ENCODE measurements at regions of chr17 and their contacts with region 1.

Region 1: DNA sequence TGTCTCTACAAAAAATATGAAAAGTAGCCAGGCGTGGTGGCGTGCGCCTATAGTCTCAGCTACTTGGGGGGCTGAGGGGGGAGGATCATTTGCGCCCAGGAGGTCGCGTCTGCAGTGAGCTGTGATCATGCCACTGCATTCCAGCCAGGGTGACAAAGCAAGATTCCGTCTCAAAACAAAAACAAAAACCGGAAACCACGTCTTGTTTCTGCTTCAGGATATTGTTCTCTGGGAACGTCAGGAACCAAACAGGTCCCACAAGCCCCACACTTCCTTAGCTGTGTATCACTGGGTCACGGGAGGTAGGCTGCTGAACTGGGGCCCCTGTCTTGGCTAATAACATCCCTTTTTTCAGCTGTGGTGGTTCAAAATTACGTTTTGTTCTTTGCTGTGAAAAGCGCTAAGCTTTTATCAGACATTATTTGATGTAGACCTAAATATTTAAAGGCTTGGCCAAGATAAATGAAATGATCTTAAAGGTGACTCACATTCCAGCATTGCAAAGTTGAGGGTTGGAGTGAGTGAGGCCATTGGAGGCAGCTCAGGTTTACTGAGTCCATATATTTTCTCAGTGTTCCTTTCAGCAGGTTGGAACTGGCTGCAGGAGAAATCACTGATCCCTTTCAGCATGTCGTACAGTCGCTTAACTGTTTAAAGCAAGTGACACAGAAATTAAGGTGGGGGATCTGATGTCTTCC is 16.4 kb upstream of the SEC14L1 start:
- DNase-seq: peak; percentile 91
- ATAC-seq: peak; percentile 23
- H3K4me3 ChIP-seq: peak overlapping the region; percentile 9; the same call in 1 of the 2 replicates
- H3K27ac ChIP-seq: peak overlapping the region; percentile 95
- H3K4me1 ChIP-seq: peaks cover 64% of the 10 kb centered on the region
- H3K27me3 ChIP-seq: no peaks in the 10 kb centered on the region
- CTCF ChIP-seq: no peak

Region 2: GRCh38 chr17:77061669-77062068 is 62.7 kb before region 1 on chr17:
- CTCF ChIA-PET with region 1: no interaction called
- POLR2A ChIA-PET with region 1: no interaction called
- intact Hi-C with region 1: no loop called
- DNase-seq: no peak
- ATAC-seq: no peak
- H3K4me3 ChIP-seq: no peak overlapping the region
- H3K27ac ChIP-seq: no peak overlapping the region
- H3K4me1 ChIP-seq: no peaks in the 10 kb centered on the region; the same call in 1 of the 2 replicates
- H3K27me3 ChIP-seq: peaks cover 8% of the 10 kb centered on the region; the same call in 1 of the 2 replicates
- CTCF ChIP-seq: no peak

Region 3: DNA sequence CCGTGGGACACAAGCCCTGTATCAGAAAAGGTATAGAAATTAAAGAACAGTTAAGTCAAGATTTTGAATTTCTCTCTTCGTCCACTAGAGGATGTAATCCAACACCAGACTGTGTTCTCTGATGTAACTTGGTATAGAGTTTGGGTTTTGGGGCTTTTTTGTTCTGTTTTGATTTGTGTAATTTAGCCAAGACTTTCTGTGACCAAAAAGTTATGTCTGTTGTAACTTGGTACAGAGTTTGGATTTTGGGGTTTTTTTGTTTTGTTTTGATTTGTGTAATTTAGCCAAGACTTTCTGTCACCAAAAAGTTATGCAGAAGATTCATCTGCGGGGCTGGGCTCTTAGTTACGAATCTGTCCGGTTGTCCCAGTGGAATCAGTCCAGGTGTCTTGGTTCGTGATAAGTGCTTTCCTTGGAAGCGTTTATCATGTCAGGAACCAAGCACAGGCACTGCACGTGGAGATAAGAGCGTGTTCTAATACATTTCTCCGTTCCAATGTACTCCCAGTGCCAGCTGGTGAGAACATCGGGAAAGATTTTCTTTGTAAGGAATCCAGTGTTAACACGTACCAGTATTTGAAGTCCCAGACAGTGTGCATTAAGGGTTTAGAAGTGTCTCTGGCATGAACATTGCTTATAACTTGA is 27.6 kb before region 1 on chr17:
- CTCF ChIA-PET with region 1: interaction called, 7 read pairs
- POLR2A ChIA-PET with region 1: interaction called, 11 read pairs
- intact Hi-C with region 1: loop called (anchors 1 kb)
- DNase-seq: peak; percentile 71
- ATAC-seq: peak; percentile 65
- H3K4me3 ChIP-seq: no peak overlapping the region
- H3K27ac ChIP-seq: no peak overlapping the region
- H3K4me1 ChIP-seq: no peaks in the 10 kb centered on the region
- H3K27me3 ChIP-seq: no peaks in the 10 kb centered on the region
- CTCF ChIP-seq: peak; percentile 86

Region 4: GRCh38 chr17:77140166-77140878 is 16.0 kb after region 1 on chr17:
- CTCF ChIA-PET with region 1: interaction called, 14 read pairs
- POLR2A ChIA-PET with region 1: interaction called, 28 read pairs
- intact Hi-C with region 1: loop called (anchors 1 kb)
- DNase-seq: peak; percentile 99
- ATAC-seq: peak; percentile 83
- H3K4me3 ChIP-seq: peak overlapping the region; percentile 61
- H3K27ac ChIP-seq: peak overlapping the region; percentile 90
- H3K4me1 ChIP-seq: peaks cover 48% of the 10 kb centered on the region
- H3K27me3 ChIP-seq: no peaks in the 10 kb centered on the region
- CTCF ChIP-seq: no peak

Region 5: DNA sequence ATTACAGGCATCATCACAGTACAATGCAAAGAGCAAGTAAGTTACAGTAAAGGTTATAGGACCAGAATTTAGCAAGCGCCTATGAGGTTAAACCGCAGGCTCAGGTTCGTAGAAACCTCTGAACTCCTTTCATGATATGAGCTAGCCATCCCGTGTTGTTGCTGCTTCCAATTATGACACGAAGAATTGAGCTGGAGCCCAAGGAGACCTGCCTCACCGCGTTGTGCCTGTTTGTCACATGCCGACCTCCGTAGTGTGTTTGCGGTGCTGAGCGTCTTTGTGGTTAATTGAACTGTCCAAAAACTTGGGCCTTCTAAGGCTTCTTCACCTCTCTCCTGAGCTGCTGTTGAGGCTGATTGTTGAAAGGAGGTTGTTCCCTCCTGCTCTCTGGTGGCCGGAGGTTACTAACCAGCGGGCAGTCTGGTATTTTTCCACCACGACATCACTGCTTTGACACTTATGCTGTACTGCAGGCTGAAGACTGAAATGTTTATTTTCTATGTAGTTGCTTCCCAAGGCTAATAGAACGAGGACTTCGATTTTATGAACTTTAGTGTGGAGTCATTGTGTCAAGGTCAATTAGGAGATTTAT is 84.0 kb after region 1 on chr17:
- CTCF ChIA-PET with region 1: no interaction called
- POLR2A ChIA-PET with region 1: interaction called, 12 read pairs
- intact Hi-C with region 1: no loop called
- DNase-seq: no peak
- ATAC-seq: peak; percentile 74
- H3K4me3 ChIP-seq: no peak overlapping the region
- H3K27ac ChIP-seq: no peak overlapping the region
- H3K4me1 ChIP-seq: no peaks in the 10 kb centered on the region
- H3K27me3 ChIP-seq: no peaks in the 10 kb centered on the region
- CTCF ChIP-seq: no peak; the same call in 1 of the 2 replicates

Measured in PC-3 (cell line).